ENCODE measurements at regions of chr12 and their contacts with region 1.

Region 1: DNA sequence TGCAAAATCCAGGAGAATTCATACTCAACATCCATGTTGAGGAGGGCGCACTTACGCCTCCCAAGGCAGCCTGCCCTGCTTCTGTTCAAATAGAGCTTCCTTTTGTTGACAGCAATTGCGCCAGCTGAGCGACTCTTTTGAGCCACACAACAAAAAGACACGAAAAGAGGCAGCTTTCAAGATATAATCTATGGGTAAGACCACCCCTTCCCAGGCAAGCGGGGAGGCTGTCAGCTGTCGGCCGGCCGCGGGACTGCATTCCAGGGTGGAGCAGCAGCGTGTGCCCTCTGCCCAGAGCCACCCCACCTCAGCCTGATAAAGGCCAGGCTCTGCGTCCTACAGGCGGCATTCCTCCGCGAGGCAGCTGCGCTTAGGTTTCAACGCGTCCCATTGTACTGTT is 15.8 kb upstream of the STAB2 start:
- DNase-seq: no peak
- ATAC-seq: no peak
- H3K4me3 ChIP-seq: no peak overlapping the region
- H3K27ac ChIP-seq: no peak overlapping the region
- H3K4me1 ChIP-seq: no peaks in the 10 kb centered on the region
- CTCF ChIP-seq: no peak
- EP300 ChIP-seq: no peak
- POLR2A ChIP-seq: no peak
- RAD21 ChIP-seq: no peak

Region 2: GRCh38 chr12:103503977-103504376 is 67.3 kb before region 1 on chr12:
- CTCF ChIA-PET with region 1: no interaction called
- POLR2A ChIA-PET with region 1: no interaction called
- DNase-seq: peak in 1 of 2 experiments; percentile 34
- ATAC-seq: peak in 1 of 2 experiments; percentile 81; a peak in 3 of 6 replicates
- H3K4me3 ChIP-seq: no peak overlapping the region
- H3K27ac ChIP-seq: no peak overlapping the region
- H3K4me1 ChIP-seq: peaks cover 11% of the 10 kb centered on the region; the same call in 2 of the 3 replicates
- CTCF ChIP-seq: peak; percentile 19; the same call in 1 of the 3 replicates
- EP300 ChIP-seq: no peak
- POLR2A ChIP-seq: no peak
- RAD21 ChIP-seq: peak in 1 of 2 experiments; percentile 36; a peak in 1 of 5 replicates

Region 3: DNA sequence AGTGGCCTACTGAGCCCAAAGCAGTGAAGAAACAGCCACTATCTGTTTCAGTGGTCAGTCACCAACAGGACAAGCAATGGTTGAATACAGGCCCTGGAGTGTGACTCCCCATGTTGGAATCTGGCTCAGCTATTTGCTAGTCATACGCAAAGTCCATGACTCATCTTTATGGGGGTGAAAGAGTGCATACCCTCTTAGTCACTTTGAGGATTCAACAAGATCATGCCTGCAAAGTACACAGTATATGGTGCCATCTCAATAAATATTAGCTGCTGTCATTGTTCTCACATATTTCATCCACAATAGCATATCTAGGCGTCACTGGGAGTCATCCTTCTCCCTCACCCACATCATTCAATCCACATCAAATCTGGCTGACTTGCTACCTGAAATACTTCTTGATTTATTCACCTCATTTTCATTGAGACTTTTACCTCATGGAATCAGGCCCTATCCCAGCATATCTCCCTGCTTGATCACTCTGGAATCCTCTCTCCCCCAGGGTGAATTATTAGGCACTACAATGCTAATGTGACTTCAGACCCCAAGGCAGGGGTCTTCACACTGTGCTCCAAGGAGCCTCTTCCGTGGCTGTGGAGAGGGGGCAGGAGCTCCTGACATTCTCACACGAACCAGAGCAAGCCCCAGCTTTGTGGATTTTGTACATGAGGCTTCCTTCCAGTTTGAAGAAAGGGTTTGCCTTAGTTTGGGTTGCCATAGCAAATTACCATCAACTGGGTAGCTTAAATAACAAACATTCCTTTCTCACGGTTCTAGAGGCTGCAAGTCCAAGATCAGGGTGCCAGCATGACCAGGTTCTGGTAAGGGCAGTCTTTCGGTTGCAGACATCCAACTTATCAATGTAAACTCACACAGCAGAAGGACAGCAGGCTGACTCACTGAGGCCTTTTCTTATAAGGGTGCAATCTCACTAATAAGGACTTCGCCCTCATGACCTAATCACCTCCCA is 10.4 kb before region 1 on chr12:
- CTCF ChIA-PET with region 1: interaction called, 10 read pairs
- POLR2A ChIA-PET with region 1: no interaction called
- DNase-seq: peak; percentile 89 to 99
- ATAC-seq: peak; percentile 96 to 98
- H3K4me3 ChIP-seq: peak overlapping the region; percentile 15; the same call in 1 of the 3 replicates
- H3K27ac ChIP-seq: peak overlapping the region; percentile 87 to 89
- H3K4me1 ChIP-seq: peaks cover 22% of the 10 kb centered on the region
- CTCF ChIP-seq: no peak
- EP300 ChIP-seq: peak; percentile 88 to 95
- POLR2A ChIP-seq: no peak
- RAD21 ChIP-seq: peak; percentile 1 to 33; a peak in 3 of 5 replicates

Region 4: GRCh38 chr12:103586132-103586531 is 14.8 kb after region 1 on chr12:
- CTCF ChIA-PET with region 1: interaction called, 30 read pairs
- POLR2A ChIA-PET with region 1: interaction called, 3 read pairs
- DNase-seq: no peak
- ATAC-seq: no peak; a peak in 1 of 6 replicates
- H3K4me3 ChIP-seq: no peak overlapping the region
- H3K27ac ChIP-seq: no peak overlapping the region
- H3K4me1 ChIP-seq: no peaks in the 10 kb centered on the region
- CTCF ChIP-seq: 0 out of 3 replicates have a peak, but pooled peaks have one; percentile 6
- EP300 ChIP-seq: no peak
- POLR2A ChIP-seq: no peak
- RAD21 ChIP-seq: peak; percentile 27 to 42; a peak in 3 of 5 replicates

Region 5: GRCh38 chr12:104150416-104150815 is 579.1 kb after region 1 on chr12:
- CTCF ChIA-PET with region 1: no interaction called
- POLR2A ChIA-PET with region 1: no interaction called
- DNase-seq: no peak
- ATAC-seq: no peak
- H3K4me3 ChIP-seq: no peak overlapping the region
- H3K27ac ChIP-seq: no peak overlapping the region
- H3K4me1 ChIP-seq: no peaks in the 10 kb centered on the region
- CTCF ChIP-seq: no peak
- EP300 ChIP-seq: no peak
- POLR2A ChIP-seq: no peak
- RAD21 ChIP-seq: no peak